ENCODE measurements at regions of chr2 and their contacts with region 1.

Region 1: GRCh38 chr2:127841466-127842178 is 16.3 kb downstream of the POLR2D start:
- DNase-seq: no peak
- H3K4me3 Mint-ChIP-seq: no peak overlapping the region
- H3K27ac Mint-ChIP-seq: no peak overlapping the region
- H3K4me1 Mint-ChIP-seq: no peaks in the 10 kb centered on the region
- H3K27me3 Mint-ChIP-seq: no peaks in the 10 kb centered on the region
- CTCF ChIP-seq: no peak

Region 2: GRCh38 chr2:127174136-127174535 is 667.5 kb before region 1 on chr2:
- CTCF ChIA-PET with region 1: interaction called, 12 read pairs
- intact Hi-C with region 1: no loop called
- DNase-seq: peak; percentile 40
- H3K4me3 Mint-ChIP-seq: no peak overlapping the region
- H3K27ac Mint-ChIP-seq: no peak overlapping the region
- H3K4me1 Mint-ChIP-seq: peaks cover 25% of the 10 kb centered on the region
- H3K27me3 Mint-ChIP-seq: peaks cover 30% of the 10 kb centered on the region
- CTCF ChIP-seq: peak; percentile 45